Caco-2 (cell line): ENCODE measurements at regions of chr7 and their contacts with region 1.

Region 1: GRCh38 chr7:90766814-90767564 is 170.9 kb downstream of the CDK14 start:
- DNase-seq: peak; percentile 63 to 77
- H3K4me3 ChIP-seq: no peak overlapping the region
- H3K4me3 Mint-ChIP-seq: peak overlapping the region; percentile 27
- H3K27ac Mint-ChIP-seq: peak overlapping the region; percentile 92
- H3K4me1 ChIP-seq: peaks cover 41% of the 10 kb centered on the region
- H3K4me1 Mint-ChIP-seq: peaks cover 47% of the 10 kb centered on the region
- H3K27me3 ChIP-seq: no peaks in the 10 kb centered on the region
- H3K27me3 Mint-ChIP-seq: no peaks in the 10 kb centered on the region
- CTCF ChIP-seq: no peak

Region 2: GRCh38 chr7:90720984-90721760 is 45.8 kb before region 1 on chr7:
- CTCF ChIA-PET with region 1: no interaction called
- POLR2A ChIA-PET with region 1: no interaction called
- intact Hi-C with region 1: loop called (anchors 1 kb)
- DNase-seq: peak; percentile 89 to 92
- H3K4me3 ChIP-seq: no peak overlapping the region
- H3K4me3 Mint-ChIP-seq: peak overlapping the region; percentile 30
- H3K27ac Mint-ChIP-seq: peak overlapping the region; percentile 87
- H3K4me1 ChIP-seq: peaks cover 62% of the 10 kb centered on the region
- H3K4me1 Mint-ChIP-seq: peaks cover 37% of the 10 kb centered on the region
- H3K27me3 ChIP-seq: no peaks in the 10 kb centered on the region
- H3K27me3 Mint-ChIP-seq: no peaks in the 10 kb centered on the region
- CTCF ChIP-seq: no peak

Region 3: GRCh38 chr7:90931986-90932916 is 165.3 kb after region 1 on chr7:
- CTCF ChIA-PET with region 1: no interaction called
- POLR2A ChIA-PET with region 1: no interaction called
- intact Hi-C with region 1: loop called (anchors 5 kb)
- DNase-seq: no peak
- H3K4me3 ChIP-seq: no peak overlapping the region
- H3K4me3 Mint-ChIP-seq: no peak overlapping the region
- H3K27ac Mint-ChIP-seq: no peak overlapping the region
- H3K4me1 ChIP-seq: no peaks in the 10 kb centered on the region
- H3K4me1 Mint-ChIP-seq: no peaks in the 10 kb centered on the region
- H3K27me3 ChIP-seq: no peaks in the 10 kb centered on the region
- H3K27me3 Mint-ChIP-seq: no peaks in the 10 kb centered on the region
- CTCF ChIP-seq: no peak